Right ventricle myocardium inferior (tissue), 1 donor: ENCODE measurements at regions of chr2 and their contacts with region 1.

Region 1: DNA sequence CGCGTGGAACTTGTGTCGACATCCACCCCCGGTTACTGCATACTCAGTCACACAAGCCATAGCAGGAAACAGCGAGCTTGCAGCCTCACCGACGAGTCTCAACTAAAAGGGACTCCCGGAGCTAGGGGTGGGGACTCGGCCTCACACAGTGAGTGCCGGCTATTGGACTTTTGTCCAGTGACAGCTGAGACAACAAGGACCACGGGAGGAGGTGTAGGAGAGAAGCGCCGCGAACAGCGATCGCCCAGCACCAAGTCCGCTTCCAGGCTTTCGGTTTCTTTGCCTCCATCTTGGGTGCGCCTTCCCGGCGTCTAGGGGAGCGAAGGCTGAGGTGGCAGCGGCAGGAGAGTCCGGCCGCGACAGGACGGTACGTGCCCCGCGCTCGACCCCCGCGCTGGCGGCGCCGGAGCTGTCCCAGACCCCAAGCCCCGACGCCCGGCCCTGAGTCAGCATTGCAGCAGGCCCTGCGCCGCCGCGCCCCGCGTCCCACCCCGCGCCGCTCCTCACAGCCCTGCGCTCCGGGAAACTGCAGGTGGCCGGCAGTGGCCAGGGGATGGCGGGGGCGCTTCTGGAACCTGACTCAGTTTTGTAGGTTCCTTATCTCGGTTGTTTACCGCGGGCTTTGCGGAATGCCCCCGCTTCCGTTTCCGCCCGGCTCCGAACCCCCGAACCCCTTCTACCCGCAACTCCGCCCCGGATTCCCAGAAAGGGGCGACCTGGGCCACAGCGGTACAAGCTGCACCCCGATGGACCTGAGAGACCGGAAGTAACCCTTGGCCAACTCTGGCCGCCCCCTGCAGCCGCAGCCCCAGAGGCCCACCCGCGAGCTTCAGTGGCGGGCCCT is at the start of gene CFLAR:
- DNase-seq: peak; percentile 91
- ATAC-seq: peak; percentile 59
- total RNA-seq, gene CFLAR: 218 TPM

Region 2: DNA sequence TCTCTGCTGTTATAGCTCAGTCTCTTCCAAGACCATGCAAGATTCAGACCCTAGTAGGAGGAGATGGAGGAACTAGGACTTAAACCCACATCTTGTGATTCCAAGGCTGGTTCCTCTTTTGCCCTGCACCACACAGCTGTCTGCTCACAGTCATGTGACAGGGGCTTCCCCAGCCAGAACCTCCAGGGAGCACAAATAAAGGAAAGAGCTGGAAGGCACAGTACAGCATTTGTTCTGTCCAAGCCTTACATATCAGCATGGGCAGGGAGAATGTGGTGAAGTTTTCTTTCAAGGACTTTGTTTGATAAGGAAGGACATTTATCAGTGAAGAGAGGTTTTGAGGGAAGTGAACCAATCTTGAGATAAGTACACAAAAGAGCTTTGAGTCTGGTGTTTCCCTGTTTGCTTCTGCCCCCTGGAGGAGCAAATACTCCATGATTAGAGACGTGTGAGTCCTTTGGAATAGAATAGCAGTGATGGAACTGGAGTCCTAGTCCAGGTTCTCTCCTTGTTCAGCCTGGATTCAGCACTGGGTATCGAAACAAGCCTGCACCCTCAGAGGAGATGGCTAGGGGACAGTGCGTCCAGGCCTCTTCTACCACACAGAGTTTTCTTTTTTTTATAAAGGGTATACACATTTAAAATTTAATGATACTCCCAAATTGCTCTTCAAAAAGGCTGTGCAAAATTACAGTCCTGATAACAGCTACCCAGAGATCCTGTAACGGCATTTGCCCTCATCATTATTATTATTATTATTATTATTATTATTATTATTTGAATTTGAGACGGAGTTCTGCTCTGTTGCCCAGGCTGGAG is 42.0 kb after region 1 on chr2:
- intact Hi-C with region 1: loop called (anchors 2 kb)
- DNase-seq: peak; percentile 73
- ATAC-seq: peak; percentile 84

Region 3: DNA sequence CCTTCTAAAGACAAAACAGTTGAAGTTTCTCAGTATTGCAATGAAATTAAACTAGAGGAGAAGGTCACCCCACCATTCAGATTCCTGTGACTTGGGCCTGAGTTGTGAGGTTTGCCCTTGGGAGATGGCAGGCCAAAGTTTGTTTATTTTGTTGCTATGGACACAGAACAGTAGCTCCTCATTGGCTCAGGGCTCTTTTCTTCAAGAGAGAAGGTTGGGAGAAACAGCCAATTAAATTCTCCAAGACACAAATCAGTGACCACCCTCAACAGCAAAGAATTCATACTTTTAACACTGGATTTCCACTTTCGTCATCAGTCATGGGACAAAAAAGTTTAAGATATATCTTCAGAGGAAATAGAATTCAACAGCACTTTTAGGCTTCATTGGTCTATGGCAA is 240.9 kb after region 1 on chr2 and contains the start of gene FLACC1:
- intact Hi-C with region 1: no loop called
- DNase-seq: no peak
- ATAC-seq: peak; percentile 89
- total RNA-seq, gene FLACC1: 6.5 TPM